GM10248 (cell line): ENCODE measurements at regions of chr20 and their contacts with region 1.

Region 1: GRCh38 chr20:59207742-59208357 is 44.2 kb downstream of the ZNF831 start:
- DNase-seq: peak; percentile 86
- CTCF ChIP-seq: peak; percentile 79

Region 2: DNA sequence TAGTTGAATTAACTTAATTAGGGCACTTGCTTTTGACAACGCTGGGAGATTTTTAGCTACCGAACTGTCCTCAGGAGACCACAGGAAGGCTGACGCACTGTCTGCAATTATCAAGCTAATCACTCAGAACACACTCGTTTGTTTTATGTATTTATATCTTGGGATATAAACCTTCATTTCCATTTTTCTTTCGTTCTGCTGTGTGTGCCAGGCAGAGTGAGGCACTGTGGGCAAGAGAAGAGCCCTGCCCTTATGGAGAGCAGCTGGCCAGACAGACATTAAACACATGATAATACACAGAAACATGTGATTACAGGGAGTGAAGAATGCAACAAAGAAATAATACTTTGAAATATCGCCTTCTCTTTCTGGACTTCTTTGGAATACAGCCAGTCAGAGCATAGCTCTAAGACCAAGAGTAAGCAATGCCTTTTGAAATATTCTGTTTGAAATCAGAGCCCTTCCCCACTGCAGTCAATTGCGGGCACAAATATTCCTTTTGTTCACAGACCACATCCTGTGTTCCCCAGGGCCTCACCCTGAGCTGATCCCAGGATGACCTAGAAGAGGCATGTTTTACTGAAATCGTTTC is 1076.2 kb before region 1 on chr20:
- CTCF ChIA-PET with region 1: no interaction called
- POLR2A ChIA-PET with region 1: no interaction called
- DNase-seq: no peak
- CTCF ChIP-seq: no peak

Region 3: DNA sequence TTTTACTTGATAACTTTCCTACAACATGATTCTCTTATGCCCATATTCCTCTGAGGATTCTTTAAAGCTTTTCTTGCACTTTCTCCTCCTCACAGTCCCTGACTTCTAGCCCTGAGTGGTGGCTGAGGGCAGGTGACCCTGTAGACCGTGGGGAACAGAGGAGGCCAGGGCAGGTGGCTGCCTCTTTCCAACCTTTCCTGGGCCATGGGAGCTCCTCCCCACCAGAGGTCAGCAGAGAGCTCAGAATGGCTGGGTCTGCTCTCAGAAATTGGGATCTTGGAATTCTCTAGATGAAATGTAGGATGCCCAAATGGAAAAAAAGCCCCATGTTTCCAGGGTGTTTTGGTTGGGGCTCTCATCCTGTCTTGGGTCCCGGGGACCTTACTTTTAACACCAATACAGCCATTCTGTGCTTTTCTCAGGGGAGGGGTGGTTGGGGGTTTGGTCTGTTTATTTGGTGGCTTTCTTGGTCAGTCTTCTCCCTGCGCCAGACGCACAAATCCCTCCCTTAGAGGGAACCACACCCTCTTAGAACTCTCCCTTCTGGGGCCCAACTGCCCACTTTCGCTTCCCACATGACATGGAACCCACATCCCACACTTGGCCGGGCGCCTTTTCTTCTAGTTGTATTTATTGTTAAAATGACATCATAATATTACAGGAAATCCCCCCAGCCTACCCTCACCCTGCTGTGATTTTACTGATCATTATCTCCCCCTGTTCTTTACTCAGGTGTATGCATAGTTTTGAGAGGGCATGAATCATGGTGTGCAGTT is 337.4 kb before region 1 on chr20:
- CTCF ChIA-PET with region 1: interaction called, 51 read pairs
- POLR2A ChIA-PET with region 1: no interaction called
- DNase-seq: peak; percentile 64
- CTCF ChIP-seq: peak; percentile 89

Region 4: DNA sequence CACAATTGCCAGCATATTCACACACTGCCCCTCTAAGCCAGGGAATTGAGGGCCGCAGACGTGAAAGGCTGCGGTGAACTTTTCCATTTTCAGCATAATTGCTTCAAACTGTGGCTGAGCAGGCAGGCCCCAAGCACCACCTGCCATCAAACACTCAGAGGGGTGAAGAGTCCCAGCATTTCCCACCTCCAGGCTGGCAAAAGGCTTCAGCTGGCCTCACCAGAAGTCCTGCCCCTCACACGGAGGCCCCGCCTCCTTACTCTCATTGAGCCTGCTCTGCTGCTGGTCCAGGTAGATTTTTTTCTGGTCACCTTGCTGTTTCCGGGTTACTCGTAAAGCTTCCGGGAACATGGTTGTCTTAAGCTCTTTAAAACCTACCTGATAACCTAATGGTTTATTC is 113.3 kb before region 1 on chr20:
- CTCF ChIA-PET with region 1: interaction called, 115 read pairs
- POLR2A ChIA-PET with region 1: no interaction called
- DNase-seq: no peak
- CTCF ChIP-seq: no peak

Region 5: DNA sequence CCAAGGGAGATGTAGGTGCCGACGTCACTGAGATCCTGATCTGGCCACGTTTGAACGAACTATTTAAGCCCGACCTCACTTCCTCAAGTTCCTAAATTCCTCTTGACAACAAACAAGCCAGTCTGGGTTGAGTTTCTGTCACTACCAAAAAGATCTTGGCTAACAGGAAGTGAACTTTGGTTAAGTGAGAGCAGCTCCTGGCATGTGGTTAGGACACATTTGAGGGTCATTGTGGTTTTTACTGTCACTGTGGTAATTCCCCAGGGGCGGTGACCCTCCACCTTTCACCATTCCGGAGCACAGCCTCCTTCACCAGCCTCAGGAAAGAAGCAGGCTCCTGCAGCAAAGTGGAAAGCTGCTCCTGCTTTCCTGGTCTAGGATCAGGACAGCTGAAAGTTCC is 87.4 kb before region 1 on chr20:
- CTCF ChIA-PET with region 1: interaction called, 12 read pairs
- POLR2A ChIA-PET with region 1: no interaction called
- DNase-seq: peak; percentile 28
- CTCF ChIP-seq: no peak

Region 6: GRCh38 chr20:59153355-59153681 is 54.5 kb before region 1 on chr20:
- CTCF ChIA-PET with region 1: no interaction called
- POLR2A ChIA-PET with region 1: no interaction called
- DNase-seq: no peak
- CTCF ChIP-seq: no peak